A549 (cell line): ENCODE measurements at regions of chr6 and their contacts with region 1.

Region 1: DNA sequence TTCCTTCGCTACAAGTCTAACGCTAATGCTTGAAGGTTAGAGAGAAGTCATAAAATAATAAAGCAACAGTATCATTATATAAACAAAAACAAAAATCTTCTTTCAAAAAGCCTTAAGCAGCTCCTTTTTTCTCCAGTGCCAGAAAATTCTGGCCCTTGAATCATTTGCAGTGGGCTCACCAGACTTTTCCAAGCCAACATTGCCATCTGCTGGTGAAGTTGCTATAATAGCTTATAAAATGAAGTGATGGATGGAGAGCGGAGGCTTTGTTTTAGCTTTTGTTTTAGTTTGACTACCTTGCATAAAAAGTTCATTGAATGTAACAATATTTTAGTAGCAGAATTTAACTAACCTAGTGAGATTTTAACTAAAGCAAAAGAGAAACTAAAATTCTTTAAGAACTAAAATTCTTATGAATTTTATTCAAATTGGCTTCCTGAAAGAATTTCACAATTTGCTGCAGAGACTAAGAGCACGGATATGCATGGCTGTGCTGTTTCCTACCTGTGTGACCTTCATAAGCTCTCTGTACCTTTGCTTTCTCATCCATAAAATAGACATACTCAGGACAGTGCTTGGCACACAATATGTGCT is 44.8 kb upstream of the SLC2A12 start:
- DNase-seq: peak; percentile 58
- ATAC-seq: peak; percentile 59 to 70; a peak in 4 of 6 replicates
- H3K4me3 ChIP-seq: no peak overlapping the region
- H3K27ac ChIP-seq: no peak overlapping the region
- H3K4me1 ChIP-seq: no peaks in the 10 kb centered on the region
- CTCF ChIP-seq: peak; percentile 72
- EP300 ChIP-seq: no peak
- POLR2A ChIP-seq: no peak
- RAD21 ChIP-seq: peak; percentile 91

Region 2: GRCh38 chr6:133916650-133917151 is 180.5 kb before region 1 on chr6:
- CTCF ChIA-PET with region 1: interaction called, 300 read pairs
- POLR2A ChIA-PET with region 1: no interaction called
- DNase-seq: peak; percentile 35 to 93
- ATAC-seq: peak; percentile 90 to 93
- H3K4me3 ChIP-seq: no peak overlapping the region
- H3K27ac ChIP-seq: peak overlapping the region; percentile 88 to 91
- H3K4me1 ChIP-seq: peaks cover 23% of the 10 kb centered on the region
- CTCF ChIP-seq: peak; percentile 88
- EP300 ChIP-seq: no peak
- POLR2A ChIP-seq: no peak
- RAD21 ChIP-seq: peak; percentile 96

Region 3: GRCh38 chr6:133939778-133940667 is 157.2 kb before region 1 on chr6:
- CTCF ChIA-PET with region 1: interaction called, 12 read pairs
- POLR2A ChIA-PET with region 1: no interaction called
- DNase-seq: no peak
- ATAC-seq: no peak
- H3K4me3 ChIP-seq: no peak overlapping the region
- H3K27ac ChIP-seq: no peak overlapping the region
- H3K4me1 ChIP-seq: no peaks in the 10 kb centered on the region
- CTCF ChIP-seq: no peak
- EP300 ChIP-seq: no peak
- POLR2A ChIP-seq: no peak
- RAD21 ChIP-seq: no peak

Region 4: GRCh38 chr6:133945158-133945557 is 152.1 kb before region 1 on chr6:
- CTCF ChIA-PET with region 1: interaction called, 12 read pairs
- POLR2A ChIA-PET with region 1: no interaction called
- DNase-seq: peak in 1 of 2 experiments; percentile 3
- ATAC-seq: peak; percentile 54 to 57; a peak in 3 of 6 replicates
- H3K4me3 ChIP-seq: no peak overlapping the region
- H3K27ac ChIP-seq: no peak overlapping the region
- H3K4me1 ChIP-seq: no peaks in the 10 kb centered on the region
- CTCF ChIP-seq: no peak
- EP300 ChIP-seq: no peak
- POLR2A ChIP-seq: no peak
- RAD21 ChIP-seq: no peak

Region 5: DNA sequence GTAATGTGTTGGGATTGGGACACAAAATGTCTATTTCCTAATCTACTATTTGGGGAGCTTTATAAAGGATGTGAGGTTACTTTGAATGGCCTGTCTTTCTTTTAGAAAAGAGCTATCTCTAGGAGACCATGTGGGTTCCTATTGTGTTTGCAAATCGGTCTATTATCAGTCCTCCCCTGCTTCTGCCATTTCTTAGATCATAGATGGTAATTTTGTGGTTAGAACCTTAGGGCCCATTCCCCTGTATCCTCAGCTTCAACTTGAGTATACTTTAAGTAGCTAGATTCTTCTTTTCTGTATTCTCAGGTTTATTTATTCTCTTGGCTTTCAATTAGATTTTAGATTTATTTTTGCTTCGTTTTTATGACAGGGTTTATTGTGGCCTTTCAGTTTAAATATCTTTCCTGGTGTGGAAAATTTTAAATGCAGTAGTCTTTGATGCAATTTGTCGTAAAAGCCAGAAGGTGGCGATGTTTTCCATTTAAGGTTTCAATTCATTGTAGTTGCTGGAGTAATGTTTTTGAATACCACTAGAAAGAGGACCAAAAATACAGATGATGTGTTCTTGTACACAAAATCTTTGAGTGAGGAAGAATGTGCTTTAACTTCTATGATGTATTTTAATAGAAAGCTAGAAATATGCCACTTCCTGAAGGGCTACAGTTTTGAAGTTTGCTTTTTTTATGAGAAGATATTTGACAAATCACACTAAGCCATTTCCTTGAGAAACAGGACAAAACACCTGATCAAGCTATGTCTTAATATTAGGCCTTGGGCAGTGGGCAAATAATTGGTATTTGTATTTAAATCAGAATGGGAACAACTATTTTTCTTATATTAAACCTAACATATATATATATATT is 123.9 kb before region 1 on chr6:
- CTCF ChIA-PET with region 1: interaction called, 20 read pairs
- POLR2A ChIA-PET with region 1: no interaction called
- DNase-seq: peak; percentile 39 to 53
- ATAC-seq: peak in 1 of 2 experiments; percentile 34; a peak in 1 of 6 replicates
- H3K4me3 ChIP-seq: no peak overlapping the region
- H3K27ac ChIP-seq: no peak overlapping the region
- H3K4me1 ChIP-seq: peaks cover 19% of the 10 kb centered on the region
- CTCF ChIP-seq: peak; percentile 66
- EP300 ChIP-seq: no peak
- POLR2A ChIP-seq: no peak
- RAD21 ChIP-seq: peak; percentile 66 to 74

Region 6: GRCh38 chr6:134009876-134010275 is 87.3 kb before region 1 on chr6:
- CTCF ChIA-PET with region 1: no interaction called
- POLR2A ChIA-PET with region 1: no interaction called
- DNase-seq: no peak
- ATAC-seq: no peak
- H3K4me3 ChIP-seq: no peak overlapping the region
- H3K27ac ChIP-seq: no peak overlapping the region
- H3K4me1 ChIP-seq: no peaks in the 10 kb centered on the region
- CTCF ChIP-seq: no peak
- EP300 ChIP-seq: no peak
- POLR2A ChIP-seq: no peak
- RAD21 ChIP-seq: no peak

Region 7: DNA sequence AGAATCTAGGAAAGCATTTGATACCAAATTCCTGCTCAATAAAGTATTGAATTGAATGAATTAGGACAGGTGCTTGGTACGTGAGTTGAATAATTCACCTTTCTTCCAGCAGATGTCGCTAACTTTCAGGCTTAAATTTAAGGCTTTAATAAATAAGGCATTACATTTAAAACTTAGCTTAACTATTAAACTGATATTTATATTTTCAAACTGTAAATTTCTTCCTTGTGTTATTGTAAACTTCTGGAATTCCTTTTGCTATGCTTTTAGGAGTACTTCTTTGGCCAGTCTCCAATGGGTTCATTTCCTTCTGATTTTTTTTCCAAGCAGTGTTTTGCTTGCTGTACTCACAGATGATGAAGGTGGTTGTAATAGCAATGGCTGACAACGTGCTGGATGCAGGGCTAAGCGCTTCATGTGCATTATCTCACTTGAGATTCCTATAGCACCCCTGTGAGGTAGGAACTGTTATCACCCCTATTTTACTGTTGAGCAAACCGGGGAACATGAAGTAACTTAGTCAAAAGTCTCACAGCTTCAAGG is 26.5 kb after region 1 on chr6:
- CTCF ChIA-PET with region 1: interaction called, 11 read pairs
- POLR2A ChIA-PET with region 1: no interaction called
- DNase-seq: peak; percentile 19 to 90
- ATAC-seq: peak; percentile 98 to 99
- H3K4me3 ChIP-seq: no peak overlapping the region
- H3K27ac ChIP-seq: peak overlapping the region; percentile 39 to 40; a peak in 3 of 6 replicates
- H3K4me1 ChIP-seq: no peaks in the 10 kb centered on the region
- CTCF ChIP-seq: peak; percentile 78
- EP300 ChIP-seq: no peak
- POLR2A ChIP-seq: no peak
- RAD21 ChIP-seq: peak; percentile 54 to 56

Region 8: DNA sequence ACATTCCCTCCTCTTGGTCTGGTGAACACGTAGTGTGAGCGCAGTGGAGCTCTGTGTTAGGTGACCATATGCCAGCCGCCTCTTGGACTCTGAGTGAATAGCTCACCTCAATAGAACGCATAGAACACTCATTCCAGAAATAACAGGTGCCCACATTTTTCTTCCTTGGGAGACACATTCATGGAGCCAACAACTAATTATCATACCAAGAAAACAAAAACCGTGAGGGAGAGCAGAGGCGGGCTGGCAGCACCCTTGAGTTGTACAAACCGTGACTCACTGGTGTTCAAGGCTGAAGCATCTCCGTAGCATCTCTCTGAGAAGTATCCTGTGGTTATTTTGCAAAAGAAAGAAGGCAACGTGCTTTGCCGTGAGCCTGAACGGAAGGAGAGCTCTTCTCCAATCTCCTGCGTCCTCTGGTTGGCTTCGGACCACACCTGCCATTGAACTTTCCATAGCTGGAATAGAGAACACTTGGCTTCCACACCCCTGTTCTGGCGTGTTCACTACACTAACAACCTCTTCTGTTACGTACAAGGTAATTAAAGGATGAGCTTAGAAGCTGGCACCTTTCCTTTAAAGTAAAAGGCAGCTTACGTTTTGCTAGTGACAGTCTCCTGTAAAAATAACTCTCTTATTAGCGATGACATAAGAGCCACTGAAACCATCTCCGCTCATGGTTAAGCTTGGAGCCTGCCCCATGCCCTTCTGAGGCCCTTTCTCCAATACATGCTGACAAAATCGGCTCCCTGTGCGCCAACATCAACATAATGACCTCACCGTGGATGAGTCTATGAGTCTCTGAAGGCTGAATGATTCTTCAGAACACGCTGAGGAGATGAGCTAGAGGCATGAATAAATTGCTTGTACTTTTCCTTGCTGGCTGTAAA is 250.9 kb after region 1 on chr6:
- CTCF ChIA-PET with region 1: no interaction called
- POLR2A ChIA-PET with region 1: no interaction called
- DNase-seq: no peak
- ATAC-seq: no peak
- H3K4me3 ChIP-seq: no peak overlapping the region
- H3K27ac ChIP-seq: no peak overlapping the region
- H3K4me1 ChIP-seq: no peaks in the 10 kb centered on the region
- CTCF ChIP-seq: no peak
- EP300 ChIP-seq: no peak
- POLR2A ChIP-seq: no peak
- RAD21 ChIP-seq: no peak

Region 9: GRCh38 chr6:134416418-134417154 is 319.4 kb after region 1 on chr6:
- CTCF ChIA-PET with region 1: no interaction called
- POLR2A ChIA-PET with region 1: no interaction called
- DNase-seq: peak in 1 of 2 experiments; percentile 29
- ATAC-seq: peak; percentile 30 to 60; a peak in 4 of 6 replicates
- H3K4me3 ChIP-seq: no peak overlapping the region
- H3K27ac ChIP-seq: peak overlapping the region; percentile 9 to 58; a peak in 4 of 6 replicates
- H3K4me1 ChIP-seq: peaks cover 25% of the 10 kb centered on the region; the same call in 2 of the 3 replicates
- CTCF ChIP-seq: no peak
- EP300 ChIP-seq: no peak
- POLR2A ChIP-seq: no peak
- RAD21 ChIP-seq: no peak